Right ventricle myocardium inferior (tissue), 1 donor: ENCODE measurements at regions of chr3 and their contacts with region 1.

Region 1: DNA sequence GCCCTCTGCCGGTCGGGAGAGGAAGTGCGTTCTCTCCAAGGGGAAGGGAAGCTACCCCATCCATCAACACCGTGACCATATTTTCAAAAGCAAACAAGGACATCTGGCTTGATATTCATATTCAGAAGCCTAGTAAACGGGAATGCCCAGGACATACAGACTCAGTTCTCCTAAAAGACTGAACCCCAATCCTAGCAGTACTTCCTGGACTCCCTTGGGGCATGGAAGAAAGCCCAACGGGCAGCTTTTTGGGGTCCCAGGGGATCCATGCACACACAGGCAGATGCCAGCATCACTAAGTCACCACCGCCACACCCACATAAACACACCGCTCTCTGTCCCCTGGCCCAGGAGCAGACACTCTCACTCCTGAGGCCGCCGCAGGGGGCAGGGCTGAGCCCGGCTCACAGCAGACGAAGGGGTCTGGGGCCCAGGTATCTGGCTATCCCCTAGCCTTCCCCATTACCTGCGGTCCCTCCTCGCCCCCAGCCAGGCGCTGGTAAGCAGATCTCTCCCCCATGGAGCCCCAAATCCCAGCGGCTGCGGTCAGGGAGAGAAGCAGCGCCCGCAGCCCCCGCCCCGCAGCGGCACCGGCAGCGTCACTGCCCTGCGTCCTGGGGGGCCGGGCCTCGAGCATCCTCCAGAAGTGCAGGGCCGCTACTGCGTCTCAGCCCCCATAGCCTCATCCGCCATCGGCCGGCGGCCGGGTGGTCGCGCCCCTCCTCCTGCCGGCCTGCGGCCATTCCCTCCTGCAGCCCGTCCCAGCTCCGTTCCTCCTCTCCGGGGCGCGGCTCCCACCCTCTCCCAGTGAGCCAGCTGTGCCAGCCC is 13.4 kb downstream of the TNK2 start:
- DNase-seq: peak; percentile 82
- ATAC-seq: peak; percentile 29

Region 2: DNA sequence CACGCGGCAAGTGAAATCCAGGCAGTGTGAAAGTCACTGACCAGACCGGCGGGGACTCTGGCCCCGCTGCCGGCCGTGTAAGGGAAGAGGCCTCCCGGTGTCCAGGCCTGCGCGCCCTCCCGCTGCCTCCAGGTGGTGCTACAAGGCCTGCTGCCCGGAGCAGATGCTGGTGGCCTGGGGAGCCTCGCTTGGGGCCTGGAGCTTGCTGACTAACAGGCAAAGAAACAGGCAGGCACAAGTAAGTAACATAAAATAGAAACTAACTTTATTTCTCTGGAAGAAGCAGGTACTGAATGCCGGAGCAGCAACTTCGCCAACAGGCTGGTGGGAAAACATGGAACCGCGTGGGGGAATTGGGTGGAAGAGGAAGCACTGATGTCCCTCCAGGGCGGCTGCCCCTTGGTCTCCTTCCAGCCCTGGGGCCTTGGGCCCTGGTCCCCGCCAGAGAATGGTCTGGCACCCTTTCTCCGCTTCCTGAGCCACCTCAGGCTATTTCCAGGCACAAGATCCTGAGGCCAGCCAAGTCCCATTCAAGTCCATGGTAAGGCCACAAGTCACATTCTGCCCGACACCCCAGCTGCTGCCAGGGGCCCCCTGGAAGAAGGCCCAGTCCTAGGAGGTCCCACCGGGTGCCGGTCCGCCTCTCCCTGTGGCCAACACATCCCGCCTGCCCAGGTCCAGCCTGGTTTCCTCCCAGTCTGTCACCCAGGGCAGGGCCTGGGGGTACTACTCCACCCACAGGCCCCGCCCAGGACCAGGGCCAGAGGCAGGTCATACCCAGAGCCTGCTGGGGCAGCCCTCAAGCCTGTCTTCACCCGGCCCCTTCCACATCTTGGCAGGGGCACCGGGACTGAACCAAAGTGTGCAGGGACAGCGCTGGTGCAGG is 31.6 kb before region 1 on chr3:
- intact Hi-C with region 1: loop called (anchors 1 kb)
- DNase-seq: peak; percentile 94
- ATAC-seq: peak; percentile 96